ENCODE measurements at regions of chr16 and their contacts with region 1.

Region 1: DNA sequence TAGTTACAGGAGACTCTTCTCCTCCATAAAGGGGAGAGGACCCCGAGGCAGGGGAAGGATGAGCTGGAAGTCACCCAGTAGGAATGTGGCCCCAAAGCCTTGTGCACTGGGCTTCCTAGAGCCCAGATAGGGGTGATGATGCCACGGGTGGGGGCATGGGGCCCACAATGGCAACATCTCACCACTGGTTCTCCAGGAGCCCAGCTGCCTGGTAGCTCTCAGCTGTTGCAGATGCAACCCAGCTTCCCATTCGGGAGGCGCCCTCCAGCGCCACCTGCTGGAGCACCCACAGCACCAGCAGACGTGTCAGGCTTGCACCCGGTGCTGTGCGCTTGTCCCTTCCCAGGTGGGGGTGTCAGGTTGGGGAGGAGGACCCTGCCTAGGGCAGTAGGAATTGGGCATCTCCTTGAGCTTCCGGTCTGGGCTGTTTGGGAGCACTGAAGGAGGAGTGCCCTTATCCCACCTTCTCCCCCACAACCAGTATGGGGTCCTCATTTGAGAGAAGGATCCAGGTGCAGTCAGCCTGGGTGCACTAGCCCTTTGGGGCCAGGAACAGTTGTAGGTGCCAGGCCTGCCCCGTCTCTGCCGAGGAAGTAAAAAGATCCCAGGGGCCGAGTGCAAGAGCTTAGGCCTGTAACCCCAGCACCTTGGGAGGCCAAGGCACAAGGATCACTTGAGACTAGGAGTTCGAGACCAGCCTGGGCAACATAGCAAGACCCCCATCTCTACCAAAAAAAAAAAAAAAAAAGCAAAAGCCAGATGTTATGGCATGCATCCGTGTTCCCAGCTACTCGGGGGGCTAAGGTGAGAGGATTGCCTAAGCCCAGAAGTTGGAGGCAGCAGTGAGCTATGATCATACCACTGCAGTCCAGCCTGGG is 14.4 kb downstream of the CDIPT start:
- DNase-seq: peak; percentile 33 to 90
- H3K4me3 ChIP-seq: no peak overlapping the region
- H3K27ac ChIP-seq: no peak overlapping the region
- H3K4me1 ChIP-seq: no peaks in the 10 kb centered on the region; a peak in 1 of 7 replicates
- H3K27me3 ChIP-seq: no peaks in the 10 kb centered on the region
- CTCF ChIP-seq: peak; percentile 88 to 99 (median 94)
- EP300 ChIP-seq: no peak
- POLR2A ChIP-seq: no peak
- RAD21 ChIP-seq: peak; percentile 69 to 85

Region 2: GRCh38 chr16:29664091-29664921 is 184.4 kb before region 1 on chr16:
- CTCF ChIA-PET with region 1: no interaction called
- POLR2A ChIA-PET with region 1: no interaction called
- DNase-seq: no peak
- H3K4me3 ChIP-seq: no peak overlapping the region
- H3K27ac ChIP-seq: no peak overlapping the region
- H3K4me1 ChIP-seq: peaks cover 0 to 24% (median 18%) of the 10 kb centered on the region in 4 experiments; a peak in 6 of 7 replicates
- H3K27me3 ChIP-seq: no peaks in the 10 kb centered on the region; a peak in 1 of 7 replicates
- CTCF ChIP-seq: no peak
- EP300 ChIP-seq: no peak
- POLR2A ChIP-seq: no peak
- RAD21 ChIP-seq: no peak

Region 3: GRCh38 chr16:29708917-29709600 is 139.6 kb before region 1 on chr16:
- CTCF ChIA-PET with region 1: no interaction called
- POLR2A ChIA-PET with region 1: no interaction called
- DNase-seq: peak; percentile 73 to 87
- H3K4me3 ChIP-seq: peak overlapping the region; percentile 65 to 99 (median 74)
- H3K27ac ChIP-seq: peak overlapping the region; percentile 91
- H3K4me1 ChIP-seq: peaks cover 0 to 7% (median 2%) of the 10 kb centered on the region in 4 experiments; a peak in 1 of 7 replicates
- H3K27me3 ChIP-seq: no peaks in the 10 kb centered on the region
- CTCF ChIP-seq: 0 out of 4 replicates have a peak, but pooled peaks of 1 of the 3 experiments have one; percentile 1
- EP300 ChIP-seq: no peak
- POLR2A ChIP-seq: peak; percentile 78 to 93
- RAD21 ChIP-seq: no peak

Region 4: GRCh38 chr16:29805378-29806098 is 43.1 kb before region 1 on chr16:
- CTCF ChIA-PET with region 1: interaction called, 14 read pairs
- POLR2A ChIA-PET with region 1: interaction called, 15 read pairs
- DNase-seq: peak; percentile 92 to 96
- H3K4me3 ChIP-seq: peak overlapping the region; percentile 54 to 79 (median 72)
- H3K27ac ChIP-seq: peak overlapping the region; percentile 86
- H3K4me1 ChIP-seq: peaks cover 0 to 35% (median 25%) of the 10 kb centered on the region in 4 experiments; a peak in 6 of 7 replicates
- H3K27me3 ChIP-seq: no peaks in the 10 kb centered on the region
- CTCF ChIP-seq: no peak
- EP300 ChIP-seq: 0 out of 3 replicates have a peak, but pooled peaks of 1 of the 2 experiments have one; percentile 6
- POLR2A ChIP-seq: peak in 1 of 2 experiments; percentile 76; a peak in 2 of 3 replicates
- RAD21 ChIP-seq: no peak; a peak in 1 of 4 replicates

Region 5: DNA sequence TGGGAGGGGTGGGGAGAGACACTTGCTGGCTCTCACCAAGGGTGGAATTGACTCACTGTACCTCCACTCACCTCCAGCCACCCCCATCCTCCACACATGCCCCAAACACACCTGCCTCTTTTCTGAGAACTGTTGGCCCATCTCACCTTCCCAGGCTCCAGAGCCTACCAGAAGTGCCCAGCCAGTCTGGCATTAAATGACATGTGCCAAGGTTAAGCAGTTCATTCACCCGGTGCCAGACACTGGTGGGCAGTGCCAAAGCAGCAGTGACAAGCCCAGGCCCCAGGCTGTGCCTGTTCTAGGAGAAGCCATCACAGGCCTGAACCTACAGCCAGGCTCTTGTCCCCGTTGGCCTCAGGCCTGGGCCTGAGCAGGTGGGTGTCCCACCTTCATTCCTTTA is 17.2 kb before region 1 on chr16:
- CTCF ChIA-PET with region 1: interaction called, 212 read pairs
- POLR2A ChIA-PET with region 1: interaction called, 167 read pairs
- DNase-seq: no peak
- H3K4me3 ChIP-seq: no peak overlapping the region
- H3K27ac ChIP-seq: no peak overlapping the region
- H3K4me1 ChIP-seq: peaks cover 0 to 2% (median 0%) of the 10 kb centered on the region in 4 experiments; a peak in 1 of 7 replicates
- H3K27me3 ChIP-seq: 0 out of 7 replicates have a peak, but pooled peaks cover 0 to 3% (median 0%) of the 10 kb centered on the region in 4 experiments
- CTCF ChIP-seq: no peak
- EP300 ChIP-seq: no peak
- POLR2A ChIP-seq: no peak
- RAD21 ChIP-seq: no peak

Region 6: GRCh38 chr16:29862884-29863668 is 14.4 kb after region 1 on chr16 and contains the start of gene CDIPT:
- CTCF ChIA-PET with region 1: interaction called, 21 read pairs
- POLR2A ChIA-PET with region 1: interaction called, 11 read pairs
- DNase-seq: peak; percentile 91 to 93
- H3K4me3 ChIP-seq: peak within 1 kb of the TSS; percentile 82 to 90 (median 90)
- H3K27ac ChIP-seq: peak within 1 kb of the TSS; percentile 99
- H3K4me1 ChIP-seq: peaks cover 0 to 7% (median 3%) of the 10 kb centered on the region in 4 experiments; a peak in 3 of 7 replicates
- H3K27me3 ChIP-seq: no peaks in the 10 kb centered on the region
- CTCF ChIP-seq: peak; percentile 73 to 94 (median 78)
- EP300 ChIP-seq: peak in 1 of 2 experiments; percentile 99; a peak in 2 of 3 replicates
- POLR2A ChIP-seq: peak in 1 of 2 experiments; percentile 55; a peak in 1 of 3 replicates
- RAD21 ChIP-seq: peak in 1 of 2 experiments; percentile 23; a peak in 2 of 4 replicates
- total RNA-seq, gene CDIPT: 69.2 and 70.9 TPM in 2 replicates

Region 7: GRCh38 chr16:30049871-30050270 is 201.2 kb after region 1 on chr16:
- CTCF ChIA-PET with region 1: no interaction called
- POLR2A ChIA-PET with region 1: no interaction called
- DNase-seq: no peak
- H3K4me3 ChIP-seq: no peak overlapping the region
- H3K27ac ChIP-seq: no peak overlapping the region
- H3K4me1 ChIP-seq: peaks cover 0 to 4% (median 2%) of the 10 kb centered on the region in 4 experiments; a peak in 3 of 7 replicates
- H3K27me3 ChIP-seq: peaks cover 0 to 9% (median 2%) of the 10 kb centered on the region in 4 experiments; a peak in 2 of 7 replicates
- CTCF ChIP-seq: no peak
- EP300 ChIP-seq: no peak
- POLR2A ChIP-seq: no peak
- RAD21 ChIP-seq: no peak

Measured in H1 (cell line).